ENCODE measurements at regions of chr10 and their contacts with region 1.

Region 1: GRCh38 chr10:102835007-102835482 is 2.2 kb downstream of the CYP17A1 start:
- DNase-seq: peak; percentile 78 to 82 (median 80)
- ATAC-seq: peak; percentile 99
- H3K4me3 ChIP-seq: no peak overlapping the region
- H3K27ac ChIP-seq: no peak overlapping the region
- H3K4me1 ChIP-seq: peaks cover 9% of the 10 kb centered on the region in 2 experiments; a peak in 4 of 5 replicates
- H3K27me3 ChIP-seq: no peaks in the 10 kb centered on the region
- CTCF ChIP-seq: peak; percentile 69 to 79 (median 76)
- EP300 ChIP-seq: no peak
- POLR2A ChIP-seq: no peak
- RAD21 ChIP-seq: peak; percentile 77 to 90

Region 2: DNA sequence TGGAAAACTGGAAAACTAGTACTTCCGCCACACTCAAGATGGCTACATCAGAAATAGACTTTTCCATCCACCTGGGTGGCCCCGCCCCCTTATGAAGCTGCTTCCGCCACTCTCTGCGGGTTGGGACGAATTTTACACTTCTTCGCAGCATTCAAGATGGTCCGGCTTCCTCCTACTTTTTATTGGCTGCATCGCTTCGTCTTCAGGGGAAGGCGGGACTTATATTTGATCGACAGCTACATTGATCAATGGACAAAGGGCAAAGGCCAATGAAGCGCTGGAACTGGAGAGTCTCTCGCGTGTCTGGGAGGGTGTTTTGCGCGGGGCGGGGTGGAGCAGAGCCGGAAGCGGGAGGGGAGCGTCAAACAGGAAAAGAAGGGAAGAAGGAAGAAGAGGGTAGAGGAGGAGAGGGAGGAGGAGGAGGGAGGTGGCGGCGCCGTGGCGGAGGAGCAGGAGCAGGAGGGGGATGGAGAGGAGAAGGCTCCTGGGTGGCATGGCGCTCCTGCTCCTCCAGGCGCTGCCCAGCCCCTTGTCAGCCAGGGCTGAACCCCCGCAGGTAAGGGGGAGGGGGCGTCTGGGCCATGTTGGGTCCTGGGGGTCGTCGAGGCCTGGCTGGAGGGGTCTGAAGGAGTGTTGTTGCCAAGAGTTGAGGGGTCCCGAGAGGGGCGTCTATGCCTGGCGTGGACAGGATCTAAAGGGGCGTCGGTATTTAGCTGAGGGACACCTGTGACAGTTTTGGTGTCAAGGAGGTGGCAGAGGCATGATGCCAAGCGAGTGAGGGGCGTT is 91.3 kb before region 1 on chr10 and contains the start of gene WBP1L:
- CTCF ChIA-PET with region 1: no interaction called
- POLR2A ChIA-PET with region 1: no interaction called
- in situ Hi-C with region 1: no loop called
- intact Hi-C with region 1: loop called (anchors 5 kb)
- DNase-seq: peak; percentile 89 to 96 (median 90)
- ATAC-seq: peak; percentile 95
- H3K4me3 ChIP-seq: peak within 1 kb of the TSS; percentile 90
- H3K27ac ChIP-seq: peak within 1 kb of the TSS; percentile 72
- H3K4me1 ChIP-seq: peaks cover 9 to 28% of the 10 kb centered on the region in 2 experiments
- H3K27me3 ChIP-seq: no peaks in the 10 kb centered on the region
- CTCF ChIP-seq: peak in 1 of 3 experiments; percentile 31; a peak in 2 of 6 replicates
- EP300 ChIP-seq: no peak; the same call in 1 of the 2 replicates
- POLR2A ChIP-seq: peak; percentile 78
- RAD21 ChIP-seq: no peak
- polyA plus RNA-seq, gene WBP1L: 3.2 to 5.3 TPM

Region 3: GRCh38 chr10:102917962-102918816 is 83.1 kb after region 1 on chr10 and contains the start of gene CNNM2:
- CTCF ChIA-PET with region 1: no interaction called
- POLR2A ChIA-PET with region 1: interaction called, 3 read pairs
- in situ Hi-C with region 1: loop called (anchors 5 kb)
- intact Hi-C with region 1: loop called (anchors 2 kb)
- DNase-seq: peak; percentile 95 to 99 (median 96)
- ATAC-seq: peak; percentile 93
- H3K4me3 ChIP-seq: peak within 1 kb of the TSS; percentile 87
- H3K27ac ChIP-seq: peak within 1 kb of the TSS; percentile 81; the same call in 2 of the 3 replicates
- H3K4me1 ChIP-seq: peaks cover 0 to 26% of the 10 kb centered on the region in 2 experiments; a peak in 4 of 5 replicates
- H3K27me3 ChIP-seq: no peaks in the 10 kb centered on the region
- CTCF ChIP-seq: no peak
- EP300 ChIP-seq: peak; percentile 1; the same call in 1 of the 2 replicates
- POLR2A ChIP-seq: peak; percentile 67
- RAD21 ChIP-seq: no peak
- polyA plus RNA-seq, gene CNNM2: 0.21 to 0.23 TPM

Region 4: DNA sequence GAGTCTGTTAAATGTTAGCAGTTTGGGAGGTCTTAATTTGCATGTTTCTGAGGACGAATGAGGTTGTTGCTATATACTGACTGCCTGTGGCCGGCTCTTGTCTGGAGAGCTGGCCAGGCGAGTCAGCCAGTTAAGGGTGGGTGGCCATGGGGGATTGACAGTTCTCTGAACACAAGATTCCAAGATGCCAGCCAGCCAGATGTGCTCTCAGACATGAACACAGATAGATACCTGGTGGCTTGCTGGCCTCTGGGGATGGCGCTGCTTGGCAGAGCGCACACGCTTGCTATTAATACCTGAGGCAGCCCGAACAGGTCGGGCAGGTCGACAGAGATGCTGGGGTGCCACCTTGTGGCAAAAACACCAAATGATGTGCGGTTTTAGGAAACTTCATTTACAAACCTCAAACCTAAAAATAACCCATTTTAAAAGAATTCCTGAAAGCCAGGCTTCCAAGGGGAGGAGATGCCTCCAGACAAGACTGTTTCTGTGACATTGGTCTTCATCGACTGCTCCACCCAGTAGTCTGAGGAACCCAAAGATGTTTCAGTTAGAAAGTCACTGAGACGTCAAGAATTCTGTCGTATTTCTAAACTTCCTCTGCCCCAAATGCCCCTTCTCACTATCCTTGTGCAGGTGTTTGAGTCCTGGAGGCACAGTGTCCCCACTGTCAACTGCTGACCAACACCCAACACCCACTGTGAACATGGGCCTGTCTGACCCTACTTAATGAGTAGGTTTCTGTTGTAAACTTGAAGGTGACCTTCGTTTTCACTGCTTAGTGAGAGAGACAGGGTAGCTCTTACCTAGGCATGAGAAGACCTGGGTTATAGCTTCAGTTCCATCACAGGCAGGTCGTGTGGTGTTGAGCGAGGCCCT is 234.6 kb after region 1 on chr10:
- CTCF ChIA-PET with region 1: interaction called, 11 read pairs
- POLR2A ChIA-PET with region 1: no interaction called
- in situ Hi-C with region 1: no loop called
- intact Hi-C with region 1: loop called (anchors 1 kb)
- DNase-seq: peak; percentile 34 to 69 (median 51)
- ATAC-seq: peak; percentile 84
- H3K4me3 ChIP-seq: no peak overlapping the region
- H3K27ac ChIP-seq: no peak overlapping the region
- H3K4me1 ChIP-seq: no peaks in the 10 kb centered on the region; a peak in 1 of 5 replicates
- H3K27me3 ChIP-seq: no peaks in the 10 kb centered on the region
- CTCF ChIP-seq: peak; percentile 64 to 74 (median 72)
- EP300 ChIP-seq: no peak
- POLR2A ChIP-seq: no peak
- RAD21 ChIP-seq: peak; percentile 81 to 91

Region 5: DNA sequence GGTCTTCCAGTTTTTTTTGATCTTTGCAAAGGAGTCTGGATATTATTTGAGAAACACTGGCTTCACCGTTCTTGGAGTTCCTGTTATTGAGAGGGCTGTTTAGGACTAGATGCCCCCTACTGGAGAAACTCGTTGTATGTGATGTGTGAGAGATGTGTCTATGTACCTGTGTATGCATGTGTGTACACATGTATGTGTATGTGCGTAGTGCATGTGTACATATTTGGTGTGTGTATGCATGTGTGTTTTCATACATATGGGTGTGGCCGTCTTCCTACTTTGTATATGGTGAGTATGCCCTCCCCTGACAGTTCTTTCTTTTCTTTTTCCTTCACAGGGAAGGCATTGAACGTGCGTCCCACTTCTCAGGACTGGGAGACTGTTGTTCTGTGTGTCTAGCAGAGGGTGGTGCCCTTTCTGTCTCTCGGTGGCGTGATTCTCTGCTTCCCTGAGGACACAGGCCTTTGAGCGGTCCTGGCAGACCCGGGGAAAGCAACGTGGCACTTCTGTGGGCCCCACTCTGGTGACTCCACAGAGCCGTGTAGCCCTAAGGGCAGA is 647.0 kb after region 1 on chr10:
- CTCF ChIA-PET with region 1: no interaction called
- POLR2A ChIA-PET with region 1: no interaction called
- in situ Hi-C with region 1: loop called (anchors 10 kb)
- intact Hi-C with region 1: loop called (anchors 10 kb)
- DNase-seq: peak; percentile 51 to 73 (median 57)
- ATAC-seq: peak; percentile 88
- H3K4me3 ChIP-seq: no peak overlapping the region
- H3K27ac ChIP-seq: no peak overlapping the region
- H3K4me1 ChIP-seq: peaks cover 0 to 10% of the 10 kb centered on the region in 2 experiments; a peak in 2 of 5 replicates
- H3K27me3 ChIP-seq: 0 out of 5 replicates have a peak, but pooled peaks cover 0 to 3% of the 10 kb centered on the region in 2 experiments
- CTCF ChIP-seq: peak; percentile 33 to 59 (median 53); a peak in 4 of 6 replicates
- EP300 ChIP-seq: no peak
- POLR2A ChIP-seq: no peak
- RAD21 ChIP-seq: peak; percentile 41 to 62; a peak in 3 of 4 replicates

Measured in K562 (cell line).